Activated naive CD4-positive, alpha-beta T cell treated with anti-CD3 and anti-CD28 coated beads for 36 hours (primary cell): ENCODE measurements at regions of chr1 and their contacts with region 1.

Region 1: GRCh38 chr1:172609528-172609927 is 49.4 kb upstream of the FASLG start:
- DNase-seq: no peak
- H3K4me3 Mint-ChIP-seq: no peak overlapping the region
- H3K27ac Mint-ChIP-seq: no peak overlapping the region
- H3K4me1 Mint-ChIP-seq: peaks cover 2% of the 10 kb centered on the region
- H3K27me3 Mint-ChIP-seq: no peaks in the 10 kb centered on the region

Region 2: DNA sequence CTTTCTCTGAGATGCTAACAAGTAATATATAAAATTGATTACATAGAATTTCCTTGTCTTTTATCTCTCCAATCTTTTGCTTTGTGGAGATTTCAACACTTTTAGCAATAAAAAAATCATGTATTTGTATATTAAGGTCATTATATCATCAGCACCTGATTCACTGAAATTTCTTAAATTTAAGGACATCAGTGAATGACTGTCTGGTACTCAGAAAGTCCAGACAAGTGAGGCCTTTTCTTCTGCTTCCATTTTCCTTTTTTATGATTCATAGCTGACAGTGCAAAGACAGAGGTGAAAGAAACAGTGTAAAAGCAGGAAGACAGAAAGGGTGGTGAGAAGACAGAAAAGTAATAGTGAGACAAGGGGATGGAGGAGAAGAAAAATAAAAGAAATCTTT is 103.9 kb after region 1 on chr1:
- CTCF ChIA-PET with region 1: interaction called, 117 read pairs
- intact Hi-C with region 1: no loop called
- DNase-seq: no peak
- H3K4me3 Mint-ChIP-seq: no peak overlapping the region
- H3K27ac Mint-ChIP-seq: no peak overlapping the region
- H3K4me1 Mint-ChIP-seq: peaks cover 39% of the 10 kb centered on the region
- H3K27me3 Mint-ChIP-seq: peaks cover 3% of the 10 kb centered on the region

Region 3: GRCh38 chr1:172727956-172728603 is 118.6 kb after region 1 on chr1:
- CTCF ChIA-PET with region 1: interaction called, 63 read pairs
- intact Hi-C with region 1: loop called (anchors 1 kb)
- DNase-seq: peak; percentile 71
- H3K4me3 Mint-ChIP-seq: no peak overlapping the region
- H3K27ac Mint-ChIP-seq: no peak overlapping the region
- H3K4me1 Mint-ChIP-seq: peaks cover 17% of the 10 kb centered on the region
- H3K27me3 Mint-ChIP-seq: no peaks in the 10 kb centered on the region

Region 4: GRCh38 chr1:173255214-173255813 is 645.8 kb after region 1 on chr1:
- CTCF ChIA-PET with region 1: no interaction called
- intact Hi-C with region 1: no loop called
- DNase-seq: peak; percentile 30
- H3K4me3 Mint-ChIP-seq: no peak overlapping the region
- H3K27ac Mint-ChIP-seq: no peak overlapping the region
- H3K4me1 Mint-ChIP-seq: no peaks in the 10 kb centered on the region
- H3K27me3 Mint-ChIP-seq: no peaks in the 10 kb centered on the region